AG04449 (cell line): ENCODE measurements at regions of chr1 and their contacts with region 1.

Region 1: GRCh38 chr1:27218736-27219135 is 15.7 kb upstream of the WDTC1 start:
- DNase-seq: no peak
- H3K4me3 ChIP-seq: no peak overlapping the region
- CTCF ChIP-seq: no peak

Region 2: GRCh38 chr1:27192039-27192529 is 26.7 kb before region 1 on chr1:
- CTCF ChIA-PET with region 1: interaction called, 11 read pairs
- POLR2A ChIA-PET with region 1: no interaction called
- DNase-seq: no peak
- H3K4me3 ChIP-seq: no peak overlapping the region
- CTCF ChIP-seq: no peak